ENCODE measurements at regions of chr18 and their contacts with region 1.

Region 1: DNA sequence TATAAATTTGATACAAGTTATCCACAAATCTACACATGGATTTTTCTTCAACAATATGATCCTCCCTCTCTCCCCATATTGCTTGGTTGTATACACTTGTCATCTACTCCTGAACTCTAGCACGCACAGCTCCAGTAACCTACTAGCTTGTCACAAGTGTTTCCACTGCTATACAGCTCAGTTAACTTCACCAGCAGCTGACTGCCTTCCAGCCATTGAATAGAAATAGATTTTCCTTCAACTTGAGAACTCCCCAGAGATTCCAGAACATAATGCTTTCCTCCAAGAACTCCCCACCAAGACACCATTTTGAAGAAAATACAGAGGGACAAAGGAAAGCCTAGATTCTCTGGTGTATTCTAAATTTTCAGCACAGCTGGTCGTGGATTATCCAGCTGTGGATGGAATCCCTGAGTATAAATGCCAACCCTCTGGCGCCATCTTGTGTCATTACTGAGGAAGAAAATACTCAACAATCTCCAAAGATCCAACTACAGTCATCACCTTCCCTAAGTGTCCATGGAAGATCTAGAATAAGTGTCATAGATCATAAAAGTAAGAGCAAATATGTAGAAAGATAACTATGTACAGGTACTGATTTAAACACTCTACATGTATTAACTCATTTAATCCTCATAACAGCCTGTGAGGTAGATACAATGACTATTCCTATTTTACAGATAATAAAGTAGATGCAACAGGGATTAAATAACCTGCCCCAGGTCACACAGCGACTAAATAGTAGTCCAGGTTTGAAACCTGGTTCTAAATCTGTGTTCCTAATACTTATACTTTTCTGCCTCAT is 156.7 kb downstream of the ARHGAP28 start:
- DNase-seq: peak; percentile 65
- H3K4me3 ChIP-seq: no peak overlapping the region
- H3K27ac ChIP-seq: no peak overlapping the region
- H3K4me1 ChIP-seq: no peaks in the 10 kb centered on the region
- H3K27me3 ChIP-seq: no peaks in the 10 kb centered on the region
- CTCF ChIP-seq: peak; percentile 84
- EP300 ChIP-seq: no peak
- RAD21 ChIP-seq: peak; percentile 98

Region 2: DNA sequence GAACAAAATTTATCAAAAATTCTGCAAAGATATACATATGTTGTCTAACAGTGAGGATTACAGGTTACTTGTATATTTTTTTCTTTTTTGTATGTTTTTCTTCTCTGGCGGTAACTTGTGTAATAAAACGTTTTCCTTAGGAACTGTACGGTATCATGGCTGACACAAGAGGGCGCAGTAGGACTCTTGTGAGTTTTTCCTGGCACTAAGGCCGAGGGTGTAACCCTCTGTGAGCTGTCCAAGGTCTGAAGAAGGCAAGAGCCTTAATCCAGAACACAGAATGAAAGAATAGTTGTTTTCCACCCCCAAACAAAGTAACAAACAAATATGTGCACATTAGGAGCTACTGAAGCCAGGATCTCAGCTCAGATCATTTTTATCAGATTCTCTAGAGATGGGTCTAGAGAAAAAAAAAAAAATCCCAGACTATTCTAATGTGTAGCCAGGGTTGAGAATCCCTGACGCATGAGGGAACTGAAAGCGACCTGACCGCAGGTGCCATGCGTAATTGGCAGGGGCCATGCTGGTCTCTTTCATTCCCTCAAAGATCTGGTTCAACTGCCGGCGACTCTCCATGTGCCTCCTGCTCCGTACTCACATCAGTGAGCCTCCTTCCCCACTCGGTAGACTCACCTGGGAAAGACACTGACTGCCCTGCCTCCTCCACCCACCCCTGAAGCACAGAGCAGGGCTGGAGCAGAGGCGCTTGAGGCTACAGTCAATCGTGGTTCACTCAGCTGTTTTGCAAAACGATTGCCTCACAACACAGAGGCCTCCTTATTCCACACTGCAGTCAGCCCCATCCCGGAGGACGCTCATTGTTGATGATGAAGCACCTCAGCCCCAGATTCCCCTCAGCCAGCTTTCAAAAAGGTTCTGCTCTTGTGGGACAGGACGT is 1017.7 kb before region 1 on chr18:
- CTCF ChIA-PET with region 1: interaction called, 11 read pairs
- POLR2A ChIA-PET with region 1: no interaction called
- DNase-seq: peak; percentile 38
- H3K4me3 ChIP-seq: no peak overlapping the region
- H3K27ac ChIP-seq: no peak overlapping the region
- H3K4me1 ChIP-seq: no peaks in the 10 kb centered on the region
- H3K27me3 ChIP-seq: no peaks in the 10 kb centered on the region
- CTCF ChIP-seq: peak; percentile 89
- EP300 ChIP-seq: no peak
- RAD21 ChIP-seq: peak; percentile 85

Region 3: DNA sequence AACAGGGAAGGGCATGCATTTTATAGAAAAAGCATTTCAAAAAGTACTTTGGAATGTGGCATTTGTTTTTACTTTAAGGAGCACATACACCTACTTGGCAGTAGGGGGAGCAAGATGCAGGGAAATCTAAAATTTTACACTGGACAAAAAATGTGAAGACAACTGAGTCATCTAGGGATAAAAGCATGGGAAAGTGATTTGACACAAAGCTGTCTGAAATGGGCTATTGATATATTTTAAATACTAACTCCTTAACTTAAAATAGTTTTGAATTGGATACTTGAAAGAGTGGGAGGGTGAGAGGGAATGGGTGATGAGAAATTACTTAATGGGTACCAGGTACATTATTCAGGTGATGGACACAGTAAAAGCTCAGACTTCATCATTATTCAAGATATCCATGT is 1006.7 kb before region 1 on chr18:
- CTCF ChIA-PET with region 1: interaction called, 17 read pairs
- POLR2A ChIA-PET with region 1: no interaction called
- DNase-seq: peak; percentile 39
- H3K4me3 ChIP-seq: peak overlapping the region in 1 of 2 experiments; percentile 7; a peak in 1 of 4 replicates
- H3K27ac ChIP-seq: no peak overlapping the region
- H3K4me1 ChIP-seq: no peaks in the 10 kb centered on the region
- H3K27me3 ChIP-seq: no peaks in the 10 kb centered on the region
- CTCF ChIP-seq: peak; percentile 85
- EP300 ChIP-seq: no peak
- RAD21 ChIP-seq: peak; percentile 86

Region 4: DNA sequence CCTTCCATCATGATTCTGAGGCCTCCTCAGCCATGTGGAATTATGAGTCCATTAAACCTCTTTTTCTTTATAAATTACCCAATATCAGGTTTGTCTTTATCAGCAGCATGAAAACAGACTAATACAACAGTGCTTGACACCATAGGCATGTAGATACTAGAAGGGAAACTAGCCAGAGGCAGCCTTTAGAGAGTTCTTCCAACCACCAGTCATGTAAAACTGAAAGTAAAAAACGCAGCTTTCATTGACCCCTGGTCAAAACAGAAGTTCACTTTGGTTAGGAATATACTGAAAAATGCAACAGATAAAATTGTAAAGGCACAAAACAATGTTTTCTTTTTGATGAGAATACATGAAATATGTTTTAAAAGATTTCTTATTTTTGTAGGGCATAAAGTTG is 348.7 kb before region 1 on chr18:
- CTCF ChIA-PET with region 1: interaction called, 100 read pairs
- POLR2A ChIA-PET with region 1: no interaction called
- DNase-seq: no peak
- H3K4me3 ChIP-seq: no peak overlapping the region
- H3K27ac ChIP-seq: no peak overlapping the region
- H3K4me1 ChIP-seq: no peaks in the 10 kb centered on the region; a peak in 1 of 4 replicates
- H3K27me3 ChIP-seq: no peaks in the 10 kb centered on the region
- CTCF ChIP-seq: no peak
- EP300 ChIP-seq: no peak
- RAD21 ChIP-seq: no peak

Region 5: DNA sequence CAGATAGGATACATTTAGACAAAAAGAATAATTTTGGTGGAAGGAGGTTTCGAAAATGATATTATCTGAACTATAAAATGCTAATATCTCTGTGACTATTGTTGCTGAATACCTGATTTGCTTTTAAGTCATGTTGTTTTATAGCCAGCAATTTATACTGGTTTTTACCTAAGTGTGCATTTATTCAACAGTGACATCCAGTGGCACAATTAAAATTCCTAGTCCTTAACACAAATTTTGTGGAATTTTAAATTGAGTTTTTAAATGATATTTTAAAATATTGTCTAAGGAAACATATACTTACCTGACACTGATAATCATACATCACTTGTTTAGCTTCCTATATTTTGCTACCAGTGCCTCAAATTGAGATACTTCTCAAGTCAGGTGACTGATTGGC is 11.9 kb before region 1 on chr18:
- CTCF ChIA-PET with region 1: interaction called, 15 read pairs
- POLR2A ChIA-PET with region 1: no interaction called
- DNase-seq: no peak
- H3K4me3 ChIP-seq: no peak overlapping the region
- H3K27ac ChIP-seq: no peak overlapping the region
- H3K4me1 ChIP-seq: peaks cover 0 to 4% of the 10 kb centered on the region in 2 experiments; a peak in 2 of 4 replicates
- H3K27me3 ChIP-seq: no peaks in the 10 kb centered on the region
- CTCF ChIP-seq: peak; percentile 43
- EP300 ChIP-seq: no peak
- RAD21 ChIP-seq: peak; percentile 66

Region 6: DNA sequence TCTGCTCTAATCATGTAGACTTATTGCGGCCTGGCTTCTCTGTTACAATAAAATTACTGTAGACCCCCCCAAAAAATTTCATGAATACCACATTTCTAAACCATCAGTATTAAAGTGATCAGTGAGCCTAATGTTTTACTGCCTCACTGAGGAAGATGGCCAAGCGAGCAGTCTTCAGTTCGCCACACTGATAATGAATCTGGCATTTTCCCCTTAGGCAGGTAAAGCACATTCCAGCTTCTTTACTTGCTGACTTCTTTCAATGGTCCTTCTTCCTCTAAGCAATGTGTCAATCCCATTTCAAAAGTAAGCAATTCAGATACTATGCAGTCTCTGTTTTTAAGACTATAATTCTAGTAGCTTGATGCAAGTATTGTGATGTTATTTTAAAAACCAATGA is 93.8 kb after region 1 on chr18:
- CTCF ChIA-PET with region 1: no interaction called
- POLR2A ChIA-PET with region 1: no interaction called
- DNase-seq: no peak
- H3K4me3 ChIP-seq: no peak overlapping the region
- H3K27ac ChIP-seq: no peak overlapping the region
- H3K4me1 ChIP-seq: peaks cover 0 to 6% of the 10 kb centered on the region in 2 experiments; a peak in 1 of 4 replicates
- H3K27me3 ChIP-seq: no peaks in the 10 kb centered on the region
- CTCF ChIP-seq: no peak
- EP300 ChIP-seq: no peak
- RAD21 ChIP-seq: no peak

Measured in SK-N-SH (cell line).